Cardiac septum (tissue), 1 donor: ENCODE measurements at regions of chr19 and their contacts with region 1.

Region 1: GRCh38 chr19:51703575-51704515 is 10.7 kb downstream of the SPACA6 start:
- DNase-seq: peak; percentile 99

Region 2: DNA sequence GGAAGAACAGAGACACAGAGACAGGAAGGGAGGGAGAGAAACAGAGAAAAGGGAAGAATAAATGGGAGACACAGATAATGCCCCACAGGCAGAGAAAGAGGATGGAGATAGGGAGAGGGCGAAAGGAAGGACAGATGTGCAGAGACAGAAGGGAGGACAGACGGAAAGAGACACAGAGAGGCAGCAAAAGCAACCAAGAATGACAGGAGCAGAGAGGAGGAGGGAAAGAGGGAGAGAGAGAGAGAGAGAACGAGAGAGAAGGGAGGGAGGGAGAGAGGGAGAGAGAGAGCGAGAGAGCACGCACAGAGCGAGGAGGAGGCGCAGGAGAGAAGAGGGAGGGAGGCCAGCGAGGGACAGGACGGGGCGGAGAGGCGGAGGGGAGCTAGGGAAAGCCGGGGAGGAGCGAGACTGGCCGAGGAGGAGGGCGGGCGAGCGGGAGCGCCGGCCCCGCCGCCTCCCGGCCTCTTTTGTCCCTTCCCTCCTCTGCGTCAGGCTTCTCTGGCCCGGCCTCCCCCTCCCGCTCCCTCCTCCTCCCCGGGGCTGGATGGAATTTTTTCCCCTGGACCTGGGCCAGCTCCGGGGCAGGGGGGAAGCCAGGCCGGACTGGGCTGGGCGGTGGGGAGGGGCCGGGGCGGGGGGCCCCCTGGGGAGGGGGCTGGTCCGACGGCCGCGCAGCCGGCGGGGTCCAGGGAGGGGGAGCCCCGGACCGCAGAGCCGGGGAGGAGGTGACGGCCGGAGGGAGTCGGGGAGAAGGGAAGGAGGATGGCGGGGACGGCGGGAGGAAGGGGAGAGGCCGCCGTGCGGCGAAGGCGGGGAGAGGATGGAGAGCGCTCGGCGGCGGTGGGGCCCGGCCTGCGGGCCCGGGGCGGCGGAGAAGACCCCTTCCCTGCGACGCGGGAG is 14.9 kb before region 1 on chr19:
- intact Hi-C with region 1: loop called (anchors 1 kb)
- DNase-seq: peak; percentile 96